A673 (cell line): ENCODE measurements at regions of chr3 and their contacts with region 1.

Region 1: GRCh38 chr3:155854141-155854940 is at the start of gene SLC33A1:
- DNase-seq: peak; percentile 100
- H3K4me3 ChIP-seq: peak within 1 kb of the TSS; percentile 90
- H3K27ac ChIP-seq: peak within 1 kb of the TSS; percentile 93
- H3K4me1 ChIP-seq: no peaks in the 10 kb centered on the region
- H3K27me3 ChIP-seq: no peaks in the 10 kb centered on the region
- CTCF ChIP-seq: no peak
- total RNA-seq, gene SLC33A1: 22.7 and 26.1 TPM in 2 replicates

Region 2: DNA sequence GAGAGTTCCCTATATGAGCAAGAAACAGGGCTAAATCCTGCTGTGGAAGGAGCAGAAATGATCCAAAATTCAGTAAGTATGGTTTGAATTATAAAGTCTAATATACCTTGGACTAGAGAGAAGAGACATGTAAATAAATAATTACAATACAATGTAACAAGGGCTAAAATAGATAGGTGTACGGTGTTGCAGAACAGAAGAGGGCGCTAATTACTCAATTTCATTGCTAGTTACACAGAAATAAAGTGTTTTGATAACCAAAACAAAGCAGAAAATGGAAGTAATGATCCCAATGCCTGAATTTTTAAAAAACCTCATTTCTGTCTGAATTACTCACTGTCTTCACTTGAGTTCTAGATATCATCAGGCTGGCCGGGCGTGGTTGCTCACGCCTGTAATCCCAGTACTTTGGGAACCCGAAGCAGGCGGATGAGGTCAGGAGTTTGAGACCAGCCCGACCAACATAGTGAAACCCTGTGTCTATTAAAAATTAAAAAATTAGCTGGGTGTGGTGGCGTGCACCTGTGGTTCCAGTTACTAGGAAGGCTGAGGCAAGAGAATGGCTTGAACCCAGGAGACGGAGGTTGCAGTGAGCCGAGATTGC is 101.2 kb before region 1 on chr3:
- CTCF ChIA-PET with region 1: no interaction called
- POLR2A ChIA-PET with region 1: no interaction called
- intact Hi-C with region 1: loop called (anchors 2 kb)
- DNase-seq: peak; percentile 54
- H3K4me3 ChIP-seq: no peak overlapping the region
- H3K27ac ChIP-seq: no peak overlapping the region
- H3K4me1 ChIP-seq: no peaks in the 10 kb centered on the region
- H3K27me3 ChIP-seq: no peaks in the 10 kb centered on the region
- CTCF ChIP-seq: peak; percentile 76